Naive thymus-derived CD4-positive, alpha-beta T cell (primary cell): ENCODE measurements at regions of chr1 and their contacts with region 1.

Region 1: GRCh38 chr1:160193091-160193819 is 2.9 kb downstream of the CASQ1 start:
- DNase-seq: peak; percentile 34 to 84 (median 70)
- ATAC-seq: peak; percentile 92
- H3K4me3 ChIP-seq: no peak overlapping the region
- H3K4me3 Mint-ChIP-seq: no peak overlapping the region
- H3K27ac ChIP-seq: no peak overlapping the region
- H3K27ac Mint-ChIP-seq: no peak overlapping the region
- H3K4me1 ChIP-seq: no peaks in the 10 kb centered on the region
- H3K4me1 Mint-ChIP-seq: peaks cover 0 to 2% (median 0%) of the 10 kb centered on the region in 7 donors
- H3K27me3 ChIP-seq: no peaks in the 10 kb centered on the region
- H3K27me3 Mint-ChIP-seq: peaks cover 0 to 5% (median 0%) of the 10 kb centered on the region in 5 donors

Region 2: DNA sequence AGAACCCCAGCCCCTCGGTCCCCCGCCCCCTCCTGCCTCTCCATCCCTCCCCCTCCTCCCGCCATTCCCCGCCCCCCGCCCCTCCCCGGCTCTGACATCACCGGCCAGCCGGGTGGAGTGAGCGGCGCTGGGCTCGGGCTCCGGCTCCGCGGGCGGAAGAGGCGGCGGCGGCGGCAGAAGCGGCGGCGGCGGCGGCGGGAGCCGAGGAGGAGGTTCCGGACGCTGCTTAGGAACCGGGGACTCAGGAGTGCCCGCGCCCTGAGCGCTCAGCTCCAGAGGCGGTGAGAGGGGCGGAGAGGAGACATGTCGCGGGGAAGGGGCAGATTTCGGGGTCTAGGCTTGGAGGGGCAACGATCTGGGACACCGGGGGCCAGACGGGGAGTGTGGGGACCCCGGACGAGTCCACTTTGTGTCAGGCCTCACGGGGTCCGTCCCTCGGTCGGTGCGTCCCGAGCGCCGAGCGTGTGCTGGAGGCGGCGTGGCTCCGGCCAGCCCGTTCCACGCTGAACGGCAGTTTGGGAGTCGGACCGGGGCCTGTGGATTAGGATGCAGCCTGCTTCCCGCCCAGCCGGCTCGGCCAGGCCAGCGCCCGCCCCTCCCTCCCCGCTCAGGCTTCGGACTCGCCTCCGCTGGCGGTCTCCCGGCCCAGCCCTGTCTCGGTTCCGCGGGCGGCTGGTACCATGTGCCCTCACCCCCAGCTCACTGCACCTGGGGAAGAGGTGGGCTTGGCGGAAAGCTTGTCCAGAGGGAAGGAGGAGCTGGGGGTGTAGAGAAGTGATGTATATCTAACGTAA is 12.2 kb after region 1 on chr1 and contains the start of gene PEA15:
- CTCF ChIA-PET with region 1: interaction called, 10 read pairs
- POLR2A ChIA-PET with region 1: no interaction called
- intact Hi-C with region 1: no loop called
- DNase-seq: peak; percentile 43 to 81 (median 49)
- ATAC-seq: peak; percentile 81
- H3K4me3 ChIP-seq: peak within 1 kb of the TSS; percentile 77
- H3K4me3 Mint-ChIP-seq: peak within 1 kb of the TSS; percentile 78 to 94 (median 88)
- H3K27ac ChIP-seq: peak within 1 kb of the TSS; percentile 74
- H3K27ac Mint-ChIP-seq: peak within 1 kb of the TSS; percentile 75 to 92 (median 88)
- H3K4me1 ChIP-seq: peaks cover 12 to 16% of the 10 kb centered on the region in 2 donors
- H3K4me1 Mint-ChIP-seq: peaks cover 31 to 49% (median 37%) of the 10 kb centered on the region in 7 donors
- H3K27me3 ChIP-seq: no peaks in the 10 kb centered on the region
- H3K27me3 Mint-ChIP-seq: no peaks in the 10 kb centered on the region
- total RNA-seq, gene PEA15: 11.5 to 38.6 (median 13.4) TPM

Region 3: DNA sequence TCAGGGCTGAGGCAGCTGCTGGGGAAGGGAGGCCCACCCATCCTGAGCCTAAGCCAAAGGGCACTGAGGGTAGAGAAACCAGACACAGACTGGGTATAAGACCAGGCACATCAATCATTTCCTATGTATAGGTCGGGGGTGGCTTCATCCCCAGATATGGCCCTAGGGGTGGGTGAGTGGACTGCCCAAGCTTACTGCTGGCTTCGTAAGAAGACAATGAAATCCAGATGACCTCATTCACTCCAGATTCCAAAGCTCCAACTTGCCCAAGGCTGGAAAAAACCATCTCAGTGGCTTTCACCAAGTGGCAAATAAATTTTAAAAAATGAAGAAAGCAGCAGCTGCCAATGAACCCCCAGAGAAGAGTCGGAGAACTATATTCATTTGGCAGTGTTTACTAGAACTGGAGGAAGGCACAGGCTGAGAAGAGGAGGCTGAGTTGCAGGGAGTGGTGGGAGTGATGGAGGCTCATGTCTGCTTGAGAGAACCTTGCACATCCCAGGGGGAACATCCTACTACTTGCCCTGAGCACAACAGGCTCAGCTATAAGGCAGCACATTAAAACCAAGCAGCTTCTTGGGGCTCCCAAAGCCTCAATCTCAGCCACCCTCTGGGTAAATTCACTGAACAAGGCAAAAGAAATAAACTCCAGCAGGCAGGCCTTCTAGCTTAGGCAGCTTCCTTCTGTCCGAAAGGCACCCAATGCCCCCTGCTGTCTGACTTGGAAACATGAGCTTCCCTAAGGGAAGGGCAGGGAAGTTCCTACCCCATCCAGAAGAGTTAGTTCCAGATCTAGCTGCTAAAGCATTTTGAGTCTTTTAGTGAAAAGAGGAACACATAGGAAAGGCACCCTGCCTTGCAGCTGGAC is 26.0 kb after region 1 on chr1:
- CTCF ChIA-PET with region 1: interaction called, 5 read pairs
- POLR2A ChIA-PET with region 1: no interaction called
- intact Hi-C with region 1: loop called in 1 of 2 experiments (anchors 2 kb)
- DNase-seq: no peak
- ATAC-seq: no peak
- H3K4me3 ChIP-seq: no peak overlapping the region
- H3K4me3 Mint-ChIP-seq: no peak overlapping the region
- H3K27ac ChIP-seq: no peak overlapping the region
- H3K27ac Mint-ChIP-seq: peak overlapping the region in 4 of 9 donors; percentile 28 to 56 (median 45)
- H3K4me1 ChIP-seq: no peaks in the 10 kb centered on the region
- H3K4me1 Mint-ChIP-seq: no peaks in the 10 kb centered on the region
- H3K27me3 ChIP-seq: no peaks in the 10 kb centered on the region
- H3K27me3 Mint-ChIP-seq: no peaks in the 10 kb centered on the region

Region 4: DNA sequence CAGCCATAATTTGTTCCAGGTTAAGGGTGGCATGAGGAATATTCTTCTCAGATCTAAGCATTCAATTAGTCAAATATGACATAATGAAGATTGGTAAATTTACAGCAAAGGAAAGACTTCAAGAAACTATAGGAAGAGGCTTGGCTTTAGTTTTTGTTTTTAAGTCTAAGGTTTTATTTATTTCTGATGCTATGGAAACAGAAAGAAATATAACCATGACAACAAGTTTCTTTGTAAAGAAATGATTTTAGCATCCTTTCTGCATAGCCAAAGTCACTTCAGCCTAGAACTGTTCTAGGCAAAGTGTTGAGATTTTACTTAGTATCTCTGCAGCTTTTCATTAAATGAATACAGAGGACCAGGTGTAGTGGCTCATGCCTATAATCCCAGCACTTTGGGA is 39.7 kb after region 1 on chr1:
- CTCF ChIA-PET with region 1: interaction called, 3 read pairs
- POLR2A ChIA-PET with region 1: no interaction called
- intact Hi-C with region 1: loop called in 1 of 2 experiments (anchors 5 kb)
- DNase-seq: no peak
- ATAC-seq: no peak
- H3K4me3 ChIP-seq: no peak overlapping the region
- H3K4me3 Mint-ChIP-seq: no peak overlapping the region
- H3K27ac ChIP-seq: no peak overlapping the region
- H3K27ac Mint-ChIP-seq: peak overlapping the region in 4 of 9 donors; percentile 9 to 53 (median 45)
- H3K4me1 ChIP-seq: no peaks in the 10 kb centered on the region
- H3K4me1 Mint-ChIP-seq: peaks cover 5 to 19% (median 10%) of the 10 kb centered on the region in 7 donors
- H3K27me3 ChIP-seq: no peaks in the 10 kb centered on the region
- H3K27me3 Mint-ChIP-seq: no peaks in the 10 kb centered on the region

Region 5: GRCh38 chr1:160251687-160252526 is 58.7 kb after region 1 on chr1:
- CTCF ChIA-PET with region 1: interaction called, 20 read pairs
- POLR2A ChIA-PET with region 1: interaction called, 3 read pairs
- intact Hi-C with region 1: loop called (anchors 1 kb)
- DNase-seq: peak in 8 of 9 donors; percentile 43 to 70 (median 60)
- ATAC-seq: peak; percentile 99
- H3K4me3 ChIP-seq: no peak overlapping the region
- H3K4me3 Mint-ChIP-seq: no peak overlapping the region
- H3K27ac ChIP-seq: peak overlapping the region; percentile 6
- H3K27ac Mint-ChIP-seq: peak overlapping the region in 7 of 9 donors; percentile 46 to 80 (median 62)
- H3K4me1 ChIP-seq: no peaks in the 10 kb centered on the region
- H3K4me1 Mint-ChIP-seq: peaks cover 6 to 34% (median 30%) of the 10 kb centered on the region in 7 donors
- H3K27me3 ChIP-seq: no peaks in the 10 kb centered on the region
- H3K27me3 Mint-ChIP-seq: no peaks in the 10 kb centered on the region

Region 6: DNA sequence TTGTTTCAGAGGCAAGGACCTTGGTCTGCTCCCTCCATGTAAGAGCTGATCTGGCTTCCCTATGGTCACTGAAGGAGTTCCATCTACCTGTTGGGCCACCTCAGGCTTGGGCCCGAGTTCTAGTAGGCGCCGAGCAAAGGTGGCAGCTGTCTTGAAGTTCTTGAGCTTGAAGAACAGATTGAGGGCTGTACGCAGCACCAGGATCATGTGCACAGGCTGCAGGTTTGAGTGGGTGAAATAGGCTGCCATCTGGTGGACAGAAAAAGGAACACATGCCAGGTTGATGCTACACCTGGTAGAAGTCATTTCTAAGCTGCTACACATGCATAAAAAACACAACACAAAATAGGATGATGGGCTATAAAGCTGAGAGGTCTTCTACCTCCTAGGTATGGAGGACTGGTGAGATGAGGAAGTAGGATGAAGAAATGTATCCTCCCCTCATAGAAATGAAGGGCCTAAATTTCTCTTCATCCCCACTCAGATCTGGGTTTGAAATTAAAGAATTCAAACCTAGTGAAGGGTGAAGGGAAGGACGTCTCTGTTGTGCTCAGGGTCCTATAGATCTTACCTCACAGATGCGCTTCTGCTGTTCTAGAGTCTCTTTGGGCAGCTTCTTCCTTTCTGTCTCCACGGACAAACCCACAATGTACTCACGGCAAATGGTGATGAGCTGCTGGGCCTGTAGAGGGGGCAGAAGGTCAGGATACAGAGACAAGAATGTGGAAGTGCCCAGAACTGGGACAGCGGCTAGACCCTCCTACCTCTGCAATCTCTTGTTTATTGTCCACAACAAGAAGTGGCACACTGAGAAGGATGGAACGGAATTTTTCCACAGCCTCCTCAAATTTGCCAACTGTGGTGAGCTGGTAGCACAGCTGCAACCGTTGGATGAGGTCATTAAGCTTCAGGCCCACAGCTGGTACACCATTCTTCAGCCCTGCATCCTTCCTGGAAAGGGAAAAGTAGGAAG is 98.3 kb after region 1 on chr1:
- CTCF ChIA-PET with region 1: interaction called, 47 read pairs
- POLR2A ChIA-PET with region 1: interaction called, 4 read pairs
- intact Hi-C with region 1: loop called (anchors 1 kb)
- DNase-seq: peak; percentile 24 to 82 (median 74)
- ATAC-seq: peak; percentile 98
- H3K4me3 ChIP-seq: no peak overlapping the region
- H3K4me3 Mint-ChIP-seq: no peak overlapping the region
- H3K27ac ChIP-seq: no peak overlapping the region
- H3K27ac Mint-ChIP-seq: peak overlapping the region; percentile 0 to 88 (median 40)
- H3K4me1 ChIP-seq: peaks cover 0 to 3% of the 10 kb centered on the region in 2 donors
- H3K4me1 Mint-ChIP-seq: peaks cover 2 to 7% (median 6%) of the 10 kb centered on the region in 7 donors
- H3K27me3 ChIP-seq: no peaks in the 10 kb centered on the region
- H3K27me3 Mint-ChIP-seq: no peaks in the 10 kb centered on the region